ENCODE measurements at regions of chr18 and their contacts with region 1.

Region 1: DNA sequence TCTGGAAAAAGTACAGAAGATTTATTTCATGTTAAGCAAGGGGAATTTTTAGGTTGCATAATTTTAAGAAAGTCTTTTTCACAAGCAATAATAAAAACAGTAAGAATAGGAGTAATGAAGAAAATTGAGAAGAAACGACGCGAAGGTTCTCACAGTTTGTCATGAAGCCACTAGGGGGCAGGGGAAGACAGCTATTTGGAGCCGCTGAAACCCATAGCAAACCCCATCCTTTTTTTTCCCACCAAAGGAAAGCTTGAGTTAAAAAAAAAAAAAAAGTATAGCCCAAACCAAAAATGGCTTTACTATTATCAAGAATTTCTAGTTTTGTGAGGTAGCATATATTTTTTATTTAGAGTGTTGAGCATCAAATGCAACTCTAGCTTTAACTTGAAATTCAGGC is 300.9 kb downstream of the PHLPP1 start:
- DNase-seq: peak; percentile 74
- ATAC-seq: peak; percentile 60
- H3K4me3 ChIP-seq: no peak overlapping the region
- H3K4me3 Mint-ChIP-seq: no peak overlapping the region
- H3K27ac ChIP-seq: no peak overlapping the region
- H3K27ac Mint-ChIP-seq: no peak overlapping the region
- H3K4me1 ChIP-seq: no peaks in the 10 kb centered on the region
- H3K4me1 Mint-ChIP-seq: no peaks in the 10 kb centered on the region
- H3K27me3 ChIP-seq: no peaks in the 10 kb centered on the region
- H3K27me3 Mint-ChIP-seq: peaks cover 21% of the 10 kb centered on the region
- CTCF ChIP-seq: peak; percentile 86

Region 2: GRCh38 chr18:62852851-62853250 is 163.4 kb before region 1 on chr18:
- CTCF ChIA-PET with region 1: no interaction called
- POLR2A ChIA-PET with region 1: no interaction called
- intact Hi-C with region 1: no loop called
- DNase-seq: no peak
- ATAC-seq: no peak
- H3K4me3 ChIP-seq: no peak overlapping the region
- H3K4me3 Mint-ChIP-seq: no peak overlapping the region
- H3K27ac ChIP-seq: no peak overlapping the region
- H3K27ac Mint-ChIP-seq: no peak overlapping the region
- H3K4me1 ChIP-seq: no peaks in the 10 kb centered on the region
- H3K4me1 Mint-ChIP-seq: peaks cover 14% of the 10 kb centered on the region
- H3K27me3 ChIP-seq: no peaks in the 10 kb centered on the region
- H3K27me3 Mint-ChIP-seq: no peaks in the 10 kb centered on the region
- CTCF ChIP-seq: no peak

Region 3: GRCh38 chr18:62867534-62867933 is 148.7 kb before region 1 on chr18:
- CTCF ChIA-PET with region 1: no interaction called
- POLR2A ChIA-PET with region 1: no interaction called
- intact Hi-C with region 1: no loop called
- DNase-seq: no peak
- ATAC-seq: no peak
- H3K4me3 ChIP-seq: no peak overlapping the region
- H3K4me3 Mint-ChIP-seq: no peak overlapping the region
- H3K27ac ChIP-seq: no peak overlapping the region
- H3K27ac Mint-ChIP-seq: no peak overlapping the region
- H3K4me1 ChIP-seq: peaks cover 7 to 10% of the 10 kb centered on the region in 2 donors
- H3K4me1 Mint-ChIP-seq: peaks cover 11% of the 10 kb centered on the region
- H3K27me3 ChIP-seq: no peaks in the 10 kb centered on the region
- H3K27me3 Mint-ChIP-seq: no peaks in the 10 kb centered on the region
- CTCF ChIP-seq: no peak

Region 4: GRCh38 chr18:63005306-63005705 is 11.0 kb before region 1 on chr18:
- CTCF ChIA-PET with region 1: interaction called, 18 read pairs
- POLR2A ChIA-PET with region 1: no interaction called
- intact Hi-C with region 1: no loop called
- DNase-seq: no peak
- ATAC-seq: no peak
- H3K4me3 ChIP-seq: no peak overlapping the region
- H3K4me3 Mint-ChIP-seq: no peak overlapping the region
- H3K27ac ChIP-seq: no peak overlapping the region
- H3K27ac Mint-ChIP-seq: no peak overlapping the region
- H3K4me1 ChIP-seq: no peaks in the 10 kb centered on the region
- H3K4me1 Mint-ChIP-seq: no peaks in the 10 kb centered on the region
- H3K27me3 ChIP-seq: no peaks in the 10 kb centered on the region
- H3K27me3 Mint-ChIP-seq: peaks cover 3% of the 10 kb centered on the region
- CTCF ChIP-seq: no peak

Region 5: DNA sequence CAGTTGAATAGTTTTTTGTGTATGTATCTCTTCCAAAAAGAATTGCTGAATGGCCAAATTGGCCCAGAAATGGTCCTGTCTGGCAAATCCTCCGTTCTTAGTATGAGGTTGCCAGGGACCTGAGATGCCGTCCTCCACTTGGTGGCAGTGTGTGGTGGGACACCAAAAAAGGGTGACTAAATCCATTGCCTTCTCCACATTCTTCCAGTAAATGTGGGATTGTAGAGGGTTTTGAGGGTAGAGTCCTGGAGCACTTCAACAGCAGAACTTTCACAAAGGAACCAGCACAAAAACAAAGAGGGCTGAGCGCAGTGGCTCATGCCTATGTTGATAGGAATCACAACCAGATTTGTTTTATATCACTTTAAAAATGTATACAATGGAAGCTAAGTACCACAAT is 103.4 kb after region 1 on chr18:
- CTCF ChIA-PET with region 1: interaction called, 27 read pairs
- POLR2A ChIA-PET with region 1: no interaction called
- intact Hi-C with region 1: no loop called
- DNase-seq: no peak
- ATAC-seq: no peak
- H3K4me3 ChIP-seq: no peak overlapping the region
- H3K4me3 Mint-ChIP-seq: no peak overlapping the region
- H3K27ac ChIP-seq: no peak overlapping the region
- H3K27ac Mint-ChIP-seq: no peak overlapping the region
- H3K4me1 ChIP-seq: no peaks in the 10 kb centered on the region
- H3K4me1 Mint-ChIP-seq: no peaks in the 10 kb centered on the region
- H3K27me3 ChIP-seq: no peaks in the 10 kb centered on the region
- H3K27me3 Mint-ChIP-seq: peaks cover 7% of the 10 kb centered on the region
- CTCF ChIP-seq: peak; percentile 35

Region 6: GRCh38 chr18:63138436-63139340 is 122.4 kb after region 1 on chr18:
- CTCF ChIA-PET with region 1: interaction called, 14 read pairs
- POLR2A ChIA-PET with region 1: no interaction called
- intact Hi-C with region 1: no loop called
- DNase-seq: peak; percentile 80
- ATAC-seq: peak; percentile 57
- H3K4me3 ChIP-seq: peak overlapping the region; percentile 27 to 67 (median 56)
- H3K4me3 Mint-ChIP-seq: peak overlapping the region; percentile 95
- H3K27ac ChIP-seq: peak overlapping the region; percentile 73 to 84
- H3K27ac Mint-ChIP-seq: peak overlapping the region; percentile 98
- H3K4me1 ChIP-seq: peaks cover 63 to 67% of the 10 kb centered on the region in 2 donors
- H3K4me1 Mint-ChIP-seq: peaks cover 84% of the 10 kb centered on the region
- H3K27me3 ChIP-seq: no peaks in the 10 kb centered on the region
- H3K27me3 Mint-ChIP-seq: no peaks in the 10 kb centered on the region
- CTCF ChIP-seq: no peak

Region 7: DNA sequence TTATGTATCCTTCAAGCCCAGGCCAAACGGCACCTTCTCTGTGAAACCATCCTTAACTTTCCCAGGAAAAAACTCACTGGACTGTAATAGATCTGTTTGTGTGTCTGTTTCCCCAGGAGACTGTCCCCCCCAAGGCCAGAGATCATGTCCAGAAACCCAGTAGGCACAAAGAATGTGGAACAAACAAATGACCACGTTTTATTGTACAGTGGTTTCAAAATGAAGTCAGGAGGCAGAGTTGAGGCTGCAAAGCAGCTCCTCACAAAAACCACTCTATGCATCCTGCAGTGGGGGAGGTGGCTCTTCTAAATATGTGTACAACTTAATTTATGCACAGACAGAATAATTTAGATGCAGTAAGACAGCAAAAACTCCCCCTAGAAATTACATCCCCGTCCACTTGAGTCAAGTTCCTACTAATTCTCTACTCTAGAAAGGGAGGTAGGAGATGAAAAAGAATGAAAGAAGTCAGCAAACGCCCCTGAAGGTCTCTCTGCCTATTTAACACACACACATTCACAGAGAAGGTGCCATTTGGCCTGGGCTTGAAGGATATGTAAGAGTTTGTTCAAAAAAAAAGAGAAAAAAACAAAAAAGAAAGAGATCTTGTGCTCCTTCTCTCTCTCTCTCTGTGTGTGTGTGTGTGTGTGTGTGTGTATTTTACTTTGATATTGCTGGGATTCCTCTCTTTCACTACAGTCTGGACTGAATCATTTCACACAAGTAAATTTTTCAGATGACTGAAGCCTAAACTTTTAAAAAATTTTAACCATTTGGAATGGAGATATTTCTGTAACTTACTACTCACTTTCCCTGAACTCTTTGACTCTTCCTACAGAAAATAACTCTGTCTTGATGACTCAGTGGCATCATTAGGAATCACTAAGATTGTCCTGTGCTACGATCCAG is 283.8 kb after region 1 on chr18:
- CTCF ChIA-PET with region 1: no interaction called
- POLR2A ChIA-PET with region 1: no interaction called
- intact Hi-C with region 1: no loop called
- DNase-seq: no peak
- ATAC-seq: peak; percentile 21
- H3K4me3 ChIP-seq: no peak overlapping the region
- H3K4me3 Mint-ChIP-seq: peak overlapping the region; percentile 8
- H3K27ac ChIP-seq: peak overlapping the region in 1 of 2 donors; percentile 54
- H3K27ac Mint-ChIP-seq: peak overlapping the region; percentile 83
- H3K4me1 ChIP-seq: peaks cover 45 to 46% of the 10 kb centered on the region in 2 donors
- H3K4me1 Mint-ChIP-seq: peaks cover 77% of the 10 kb centered on the region
- H3K27me3 ChIP-seq: no peaks in the 10 kb centered on the region
- H3K27me3 Mint-ChIP-seq: no peaks in the 10 kb centered on the region
- CTCF ChIP-seq: no peak

Region 8: GRCh38 chr18:63339920-63340484 is 323.7 kb after region 1 on chr18:
- CTCF ChIA-PET with region 1: interaction called, 74 read pairs
- POLR2A ChIA-PET with region 1: no interaction called
- intact Hi-C with region 1: loop called (anchors 1 kb)
- DNase-seq: peak; percentile 62
- ATAC-seq: peak; percentile 33
- H3K4me3 ChIP-seq: no peak overlapping the region
- H3K4me3 Mint-ChIP-seq: no peak overlapping the region
- H3K27ac ChIP-seq: no peak overlapping the region
- H3K27ac Mint-ChIP-seq: no peak overlapping the region
- H3K4me1 ChIP-seq: no peaks in the 10 kb centered on the region
- H3K4me1 Mint-ChIP-seq: no peaks in the 10 kb centered on the region
- H3K27me3 ChIP-seq: no peaks in the 10 kb centered on the region
- H3K27me3 Mint-ChIP-seq: no peaks in the 10 kb centered on the region
- CTCF ChIP-seq: peak; percentile 75

Region 9: DNA sequence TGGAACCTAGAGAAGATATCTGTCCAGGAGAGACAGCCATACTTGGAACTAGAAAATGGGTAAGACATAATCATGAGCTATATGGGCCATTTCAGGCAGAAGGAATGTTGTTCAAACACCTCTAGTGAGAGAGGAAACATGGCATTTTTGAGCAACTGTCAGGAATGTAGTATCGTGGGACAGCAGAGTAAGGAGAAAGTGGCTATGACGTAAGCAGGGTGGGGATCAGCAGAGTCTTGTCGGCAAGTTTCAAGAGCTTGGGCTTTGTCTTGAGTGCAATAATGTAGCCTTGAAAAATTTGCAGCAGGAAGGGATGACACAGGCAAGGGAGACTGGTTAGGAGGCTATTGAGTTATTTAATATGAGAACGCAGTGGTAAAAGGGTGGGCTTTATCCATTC is 779.3 kb after region 1 on chr18:
- CTCF ChIA-PET with region 1: no interaction called
- POLR2A ChIA-PET with region 1: no interaction called
- intact Hi-C with region 1: no loop called
- DNase-seq: no peak
- ATAC-seq: no peak
- H3K4me3 ChIP-seq: no peak overlapping the region
- H3K4me3 Mint-ChIP-seq: no peak overlapping the region
- H3K27ac ChIP-seq: no peak overlapping the region
- H3K27ac Mint-ChIP-seq: no peak overlapping the region
- H3K4me1 ChIP-seq: no peaks in the 10 kb centered on the region
- H3K4me1 Mint-ChIP-seq: no peaks in the 10 kb centered on the region
- H3K27me3 ChIP-seq: no peaks in the 10 kb centered on the region
- H3K27me3 Mint-ChIP-seq: no peaks in the 10 kb centered on the region
- CTCF ChIP-seq: no peak

Measured in B cell (primary cell).